Sigmoid colon (tissue), 7 donors: ENCODE measurements at regions of chr17 and their contacts with region 1.

Region 1: GRCh38 chr17:28494445-28495188 is 11.5 kb upstream of the FOXN1 start:
- DNase-seq: peak; percentile 75
- H3K4me3 ChIP-seq: no peak overlapping the region
- H3K27ac ChIP-seq: no peak overlapping the region
- H3K4me1 ChIP-seq: no peaks in the 10 kb centered on the region
- H3K27me3 ChIP-seq: peaks cover 0 to 8% (median 0%) of the 10 kb centered on the region in 3 donors
- CTCF ChIP-seq: peak; percentile 59 to 78 (median 72)
- EP300 ChIP-seq: no peak
- POLR2A ChIP-seq: no peak

Region 2: DNA sequence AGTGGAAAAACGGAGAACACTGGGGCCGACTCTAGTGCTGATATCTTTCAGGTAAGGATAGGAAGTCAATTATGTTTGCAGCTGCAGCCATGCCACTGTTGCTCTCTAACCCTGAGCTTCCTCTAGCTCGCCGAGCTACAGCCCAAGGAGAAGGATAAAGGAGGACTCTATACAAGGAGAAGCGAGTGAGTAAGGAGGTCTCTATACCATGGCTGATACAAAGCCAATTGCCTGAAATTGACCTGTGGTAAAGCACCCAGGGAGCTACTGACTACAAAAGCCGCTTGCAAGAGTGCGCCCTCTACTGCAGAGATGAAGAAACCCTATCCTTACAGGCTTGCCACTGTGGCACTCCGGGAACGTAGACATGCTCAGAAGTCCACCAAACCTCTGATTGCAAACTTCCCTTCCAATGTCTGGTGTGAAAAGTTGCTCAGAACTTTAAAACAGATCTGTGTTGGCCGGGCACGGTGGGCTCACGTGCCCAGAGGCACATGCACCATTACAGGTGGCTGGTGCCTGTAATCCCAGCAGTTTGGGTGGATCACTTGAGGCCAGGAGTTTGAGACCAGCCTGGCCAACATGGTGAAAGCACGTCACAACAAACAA is 77.8 kb before region 1 on chr17:
- intact Hi-C with region 1: no loop called
- DNase-seq: no peak
- H3K4me3 ChIP-seq: no peak overlapping the region
- H3K27ac ChIP-seq: no peak overlapping the region
- H3K4me1 ChIP-seq: no peaks in the 10 kb centered on the region
- H3K27me3 ChIP-seq: peaks cover 0 to 5% (median 0%) of the 10 kb centered on the region in 3 donors
- CTCF ChIP-seq: peak in 1 of 4 experiments; percentile 19
- EP300 ChIP-seq: no peak
- POLR2A ChIP-seq: no peak

Region 3: GRCh38 chr17:28612936-28613872 is 118.6 kb after region 1 on chr17:
- intact Hi-C with region 1: loop called (anchors 1 kb)
- DNase-seq: no peak
- H3K4me3 ChIP-seq: no peak overlapping the region
- H3K27ac ChIP-seq: no peak overlapping the region
- H3K4me1 ChIP-seq: no peaks in the 10 kb centered on the region
- H3K27me3 ChIP-seq: no peaks in the 10 kb centered on the region
- CTCF ChIP-seq: peak; percentile 21 to 72 (median 48)
- EP300 ChIP-seq: no peak
- POLR2A ChIP-seq: no peak

Region 4: DNA sequence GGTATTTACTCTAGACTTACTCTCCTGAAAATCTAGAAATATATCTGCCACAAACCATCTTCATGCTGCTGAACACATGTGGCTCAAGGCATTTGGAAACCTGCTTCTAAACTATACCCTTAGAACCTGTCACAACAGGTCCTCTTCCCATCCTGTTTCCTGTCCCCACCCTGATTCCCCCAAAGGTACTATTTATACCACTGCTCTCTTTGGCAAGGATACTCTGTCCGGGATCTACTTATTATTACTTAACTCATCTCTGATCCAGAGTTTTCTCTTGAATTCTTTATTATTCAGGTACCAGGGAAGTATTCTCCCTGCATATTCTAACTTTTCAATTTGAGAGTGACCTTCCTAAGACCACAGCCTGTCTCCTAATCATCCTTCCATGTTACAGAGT is 282.6 kb after region 1 on chr17:
- intact Hi-C with region 1: no loop called
- DNase-seq: no peak
- H3K4me3 ChIP-seq: no peak overlapping the region
- H3K27ac ChIP-seq: peak overlapping the region in 1 of 4 donors; percentile 24
- H3K4me1 ChIP-seq: peaks cover 0 to 14% (median 4%) of the 10 kb centered on the region in 4 donors
- H3K27me3 ChIP-seq: no peaks in the 10 kb centered on the region
- CTCF ChIP-seq: no peak
- EP300 ChIP-seq: no peak
- POLR2A ChIP-seq: no peak